AG04449 (cell line): ENCODE measurements at regions of chr11 and their contacts with region 1.

Region 1: GRCh38 chr11:65418711-65419459 is 3.7 kb upstream of the NEAT1 start:
- DNase-seq: no peak
- H3K4me3 ChIP-seq: peak overlapping the region; percentile 46
- CTCF ChIP-seq: no peak

Region 2: DNA sequence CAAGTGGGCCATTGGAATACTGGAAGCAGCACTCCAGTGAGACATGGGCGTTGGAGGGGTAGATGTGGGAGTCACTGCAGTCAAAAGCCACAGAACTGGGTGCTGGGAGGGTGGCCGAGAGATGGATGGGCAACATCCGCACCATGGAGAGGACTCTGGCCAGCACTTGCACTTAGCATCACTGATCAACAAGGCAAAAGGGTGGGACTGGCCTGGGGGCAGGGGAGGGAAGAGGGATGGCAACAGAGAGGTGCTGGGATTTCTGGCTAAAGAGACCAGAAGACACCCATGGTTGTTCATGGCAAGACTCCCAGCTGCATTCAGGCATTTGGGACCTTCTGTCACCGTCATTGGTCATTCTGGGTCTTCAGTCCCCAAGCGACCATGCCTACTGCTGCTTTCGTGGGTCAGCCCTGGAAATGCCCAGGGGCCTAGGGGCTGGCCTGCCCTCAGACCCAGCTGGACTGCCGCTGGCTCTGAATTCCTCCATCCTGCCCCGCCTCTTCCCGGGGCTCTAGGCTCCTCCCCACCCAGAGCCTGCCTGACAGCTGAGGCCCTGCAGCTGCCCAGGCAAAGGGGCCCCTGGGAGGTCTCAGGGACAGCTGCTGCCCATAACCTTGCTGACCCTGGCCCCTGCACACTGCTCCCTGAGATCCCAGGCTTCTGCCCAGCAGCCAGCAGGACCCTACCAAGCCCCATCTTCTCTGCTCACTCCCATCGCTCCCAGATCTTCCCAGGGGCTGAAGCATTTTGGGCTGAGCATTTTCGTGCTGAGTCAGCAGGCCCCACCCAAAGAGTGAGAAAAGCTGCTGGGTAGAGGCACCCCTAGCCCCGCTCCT is 117.2 kb before region 1 on chr11:
- CTCF ChIA-PET with region 1: no interaction called
- POLR2A ChIA-PET with region 1: no interaction called
- DNase-seq: no peak
- H3K4me3 ChIP-seq: no peak overlapping the region
- CTCF ChIP-seq: no peak

Region 3: DNA sequence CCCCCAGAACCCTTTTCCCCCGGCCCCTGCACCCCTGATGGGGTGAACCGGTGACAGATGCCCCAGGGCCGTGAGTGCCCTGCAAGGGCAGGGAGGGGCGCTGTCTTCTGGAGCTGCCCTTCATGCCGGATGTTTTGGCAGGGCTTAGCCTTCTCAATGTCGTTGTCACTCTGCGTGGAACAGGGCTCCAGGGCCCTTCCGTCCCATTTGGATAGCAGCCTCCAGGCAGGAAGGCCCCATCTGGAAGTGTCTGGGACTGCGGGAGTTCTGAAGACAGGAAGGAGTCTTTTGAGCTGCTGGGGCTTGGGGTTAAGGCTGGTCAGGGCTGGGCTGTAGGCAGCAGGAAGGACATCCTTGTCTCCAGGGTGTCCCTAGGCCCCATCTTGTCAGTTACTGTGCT is 27.9 kb before region 1 on chr11:
- CTCF ChIA-PET with region 1: interaction called, 90 read pairs
- POLR2A ChIA-PET with region 1: interaction called, 66 read pairs
- DNase-seq: no peak
- H3K4me3 ChIP-seq: peak overlapping the region; percentile 40
- CTCF ChIP-seq: no peak

Region 4: DNA sequence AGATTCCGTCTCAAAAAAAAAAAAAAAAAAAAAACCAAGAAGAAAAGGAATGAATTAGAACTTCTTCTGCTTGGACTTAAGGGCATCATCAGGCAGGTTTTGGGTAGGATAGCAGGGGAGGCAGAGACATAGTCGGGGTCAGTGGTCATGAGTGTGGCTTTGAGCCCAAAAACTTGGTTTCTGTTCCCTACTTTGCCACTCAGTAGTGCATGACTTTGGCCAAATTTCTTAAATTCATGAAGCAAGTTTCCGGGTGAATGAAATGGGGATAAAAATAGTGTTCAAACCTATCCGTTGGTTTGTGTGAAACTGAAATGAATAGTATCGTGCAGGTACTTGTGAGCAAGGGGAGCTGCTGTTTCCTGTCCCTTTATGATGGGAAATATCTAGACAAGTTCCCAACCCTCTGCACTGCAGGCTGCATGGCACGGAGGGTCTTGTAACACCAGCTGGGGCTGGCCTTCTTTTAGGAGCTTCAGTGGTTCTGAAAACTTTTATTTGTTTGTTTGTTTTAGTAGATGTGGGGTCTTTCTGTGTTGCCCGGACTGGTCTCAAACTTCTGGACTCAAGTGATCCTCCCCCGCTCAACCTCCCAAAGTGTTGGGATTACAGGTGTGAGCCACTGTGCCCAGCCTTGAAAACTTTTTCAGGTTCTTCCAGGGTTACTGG is 22.1 kb after region 1 on chr11:
- CTCF ChIA-PET with region 1: interaction called, 8 read pairs
- POLR2A ChIA-PET with region 1: interaction called, 35 read pairs
- DNase-seq: no peak
- H3K4me3 ChIP-seq: no peak overlapping the region
- CTCF ChIP-seq: no peak

Region 5: DNA sequence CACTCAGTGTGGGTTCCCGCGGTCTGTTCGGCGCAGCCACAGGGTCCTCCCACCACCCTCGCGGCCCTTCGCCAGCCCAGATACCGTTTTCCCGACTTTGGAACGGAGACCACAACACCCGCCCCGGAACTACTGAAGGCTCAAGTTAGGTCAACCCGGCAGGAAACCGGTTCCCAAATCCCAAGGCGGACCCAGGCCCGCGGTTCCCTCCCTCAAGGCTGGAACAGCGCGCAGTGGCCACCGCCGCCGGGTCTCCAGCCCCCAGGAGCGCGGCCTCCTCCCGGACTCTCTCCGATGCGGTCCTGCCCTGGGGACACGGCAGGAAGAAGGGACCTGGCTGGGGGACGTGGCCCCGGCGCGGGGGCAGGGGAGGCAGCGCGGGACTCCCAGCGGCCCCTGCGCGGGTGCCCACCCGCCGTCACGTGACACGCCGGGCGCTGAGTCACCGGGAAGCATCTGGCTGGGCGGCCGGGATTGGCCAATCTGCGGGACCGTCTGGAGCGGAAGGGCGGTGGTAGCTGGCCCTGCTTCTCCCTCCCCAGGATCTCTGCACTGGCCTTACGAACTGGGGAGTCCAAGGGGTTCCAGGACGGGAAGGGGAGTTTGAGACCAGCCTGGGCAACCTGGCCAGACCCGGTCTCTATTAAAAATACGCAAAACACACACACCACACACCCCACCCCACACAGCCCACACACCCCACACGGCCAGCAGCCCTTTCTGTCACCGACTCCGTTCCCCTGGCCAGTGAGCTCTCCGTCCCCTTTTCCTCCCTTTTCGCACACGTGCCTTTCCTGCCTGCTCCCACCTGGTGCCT is 58.5 kb after region 1 on chr11:
- CTCF ChIA-PET with region 1: interaction called, 6 read pairs
- POLR2A ChIA-PET with region 1: interaction called, 70 read pairs
- DNase-seq: no peak
- H3K4me3 ChIP-seq: peak overlapping the region; percentile 78
- CTCF ChIP-seq: no peak

Region 6: DNA sequence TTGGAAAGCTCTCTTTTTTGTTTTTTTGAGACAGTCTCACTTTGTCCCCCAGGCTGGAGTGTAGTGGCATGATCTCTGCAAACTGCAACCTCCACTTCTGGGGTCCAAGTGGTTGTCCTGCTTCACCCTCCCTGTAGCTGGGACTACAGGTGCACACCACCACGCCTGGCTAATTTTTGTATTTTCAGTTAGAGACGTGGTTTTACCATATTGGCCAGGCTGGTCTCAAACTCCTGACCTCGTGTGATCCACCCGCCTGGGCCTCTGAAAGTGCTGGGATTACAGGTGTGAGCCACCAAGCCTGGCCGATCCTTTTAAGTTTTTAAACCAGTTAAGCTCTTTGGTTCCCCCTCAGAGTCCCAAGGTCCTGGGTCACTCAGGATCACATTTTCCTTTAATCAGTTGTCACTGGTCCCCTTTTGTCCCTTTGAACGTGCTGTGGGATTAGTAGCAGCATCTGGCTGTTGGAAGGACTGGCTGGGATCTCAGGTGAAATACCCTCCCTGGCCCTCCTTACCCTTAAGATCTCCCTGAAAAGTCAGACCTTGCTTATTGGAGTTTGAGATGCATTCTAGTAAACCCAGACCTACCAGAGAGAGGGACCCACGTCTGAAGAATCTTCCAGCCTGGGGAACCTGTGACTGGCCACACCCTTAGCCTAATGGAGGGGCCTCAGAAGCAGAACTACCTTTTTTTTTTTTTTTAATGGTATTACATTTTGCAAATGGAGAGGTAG is 88.1 kb after region 1 on chr11:
- CTCF ChIA-PET with region 1: interaction called, 151 read pairs
- POLR2A ChIA-PET with region 1: interaction called, 664 read pairs
- DNase-seq: peak; percentile 94
- H3K4me3 ChIP-seq: peak overlapping the region; percentile 99
- CTCF ChIP-seq: no peak